Activated CD4-positive, alpha-beta memory T cell treated with anti-CD3 and anti-CD28 coated beads for 36 hours (primary cell): ENCODE measurements at regions of chr20 and their contacts with region 1.

Region 1: DNA sequence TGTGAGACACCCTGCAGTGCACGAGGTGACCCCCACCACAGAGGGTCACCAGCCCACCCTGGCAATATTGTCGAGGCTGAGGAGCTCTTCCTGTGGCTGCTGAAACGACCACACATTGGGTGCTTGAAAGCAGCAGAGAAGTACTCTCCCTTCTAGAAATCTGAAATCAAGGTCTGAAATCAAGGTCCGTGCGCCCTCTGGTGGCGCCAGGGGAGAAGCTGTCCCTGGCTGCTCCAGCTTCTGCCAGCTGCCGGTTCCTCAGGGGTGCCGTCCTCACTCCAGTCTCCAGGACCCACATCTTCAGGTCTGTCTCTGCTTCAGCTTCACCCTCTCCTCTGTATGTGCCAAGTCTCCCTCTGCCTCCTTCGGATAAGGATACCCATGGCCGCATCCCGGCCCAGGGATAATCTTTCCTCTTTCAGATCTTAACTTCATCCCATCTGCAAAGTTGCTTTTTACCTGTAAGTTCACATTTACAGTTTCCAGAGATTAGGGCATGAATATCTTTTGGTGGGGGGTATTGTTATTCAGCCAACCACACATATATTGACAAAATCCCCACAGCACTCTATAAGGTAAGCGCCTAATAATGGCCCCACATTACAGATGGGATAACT is 108.3 kb upstream of the PHACTR3 start:
- DNase-seq: peak; percentile 76
- H3K4me3 Mint-ChIP-seq: no peak overlapping the region
- H3K27ac Mint-ChIP-seq: no peak overlapping the region
- H3K4me1 Mint-ChIP-seq: no peaks in the 10 kb centered on the region
- H3K27me3 Mint-ChIP-seq: peaks cover 18% of the 10 kb centered on the region

Region 2: GRCh38 chr20:58864350-58864749 is 631.7 kb before region 1 on chr20:
- CTCF ChIA-PET with region 1: interaction called, 10 read pairs
- POLR2A ChIA-PET with region 1: no interaction called
- intact Hi-C with region 1: no loop called
- DNase-seq: no peak
- H3K4me3 Mint-ChIP-seq: no peak overlapping the region
- H3K27ac Mint-ChIP-seq: no peak overlapping the region
- H3K4me1 Mint-ChIP-seq: no peaks in the 10 kb centered on the region
- H3K27me3 Mint-ChIP-seq: peaks cover 9% of the 10 kb centered on the region

Region 3: DNA sequence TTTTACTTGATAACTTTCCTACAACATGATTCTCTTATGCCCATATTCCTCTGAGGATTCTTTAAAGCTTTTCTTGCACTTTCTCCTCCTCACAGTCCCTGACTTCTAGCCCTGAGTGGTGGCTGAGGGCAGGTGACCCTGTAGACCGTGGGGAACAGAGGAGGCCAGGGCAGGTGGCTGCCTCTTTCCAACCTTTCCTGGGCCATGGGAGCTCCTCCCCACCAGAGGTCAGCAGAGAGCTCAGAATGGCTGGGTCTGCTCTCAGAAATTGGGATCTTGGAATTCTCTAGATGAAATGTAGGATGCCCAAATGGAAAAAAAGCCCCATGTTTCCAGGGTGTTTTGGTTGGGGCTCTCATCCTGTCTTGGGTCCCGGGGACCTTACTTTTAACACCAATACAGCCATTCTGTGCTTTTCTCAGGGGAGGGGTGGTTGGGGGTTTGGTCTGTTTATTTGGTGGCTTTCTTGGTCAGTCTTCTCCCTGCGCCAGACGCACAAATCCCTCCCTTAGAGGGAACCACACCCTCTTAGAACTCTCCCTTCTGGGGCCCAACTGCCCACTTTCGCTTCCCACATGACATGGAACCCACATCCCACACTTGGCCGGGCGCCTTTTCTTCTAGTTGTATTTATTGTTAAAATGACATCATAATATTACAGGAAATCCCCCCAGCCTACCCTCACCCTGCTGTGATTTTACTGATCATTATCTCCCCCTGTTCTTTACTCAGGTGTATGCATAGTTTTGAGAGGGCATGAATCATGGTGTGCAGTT is 625.6 kb before region 1 on chr20:
- CTCF ChIA-PET with region 1: no interaction called
- POLR2A ChIA-PET with region 1: no interaction called
- intact Hi-C with region 1: loop called (anchors 5 kb)
- DNase-seq: peak; percentile 64
- H3K4me3 Mint-ChIP-seq: no peak overlapping the region
- H3K27ac Mint-ChIP-seq: no peak overlapping the region
- H3K4me1 Mint-ChIP-seq: peaks cover 9% of the 10 kb centered on the region
- H3K27me3 Mint-ChIP-seq: peaks cover 2% of the 10 kb centered on the region

Region 4: GRCh38 chr20:59165891-59166709 is 329.9 kb before region 1 on chr20:
- CTCF ChIA-PET with region 1: no interaction called
- POLR2A ChIA-PET with region 1: no interaction called
- intact Hi-C with region 1: no loop called
- DNase-seq: peak; percentile 65
- H3K4me3 Mint-ChIP-seq: peak overlapping the region; percentile 77
- H3K27ac Mint-ChIP-seq: peak overlapping the region; percentile 96
- H3K4me1 Mint-ChIP-seq: peaks cover 77% of the 10 kb centered on the region
- H3K27me3 Mint-ChIP-seq: no peaks in the 10 kb centered on the region

Region 5: DNA sequence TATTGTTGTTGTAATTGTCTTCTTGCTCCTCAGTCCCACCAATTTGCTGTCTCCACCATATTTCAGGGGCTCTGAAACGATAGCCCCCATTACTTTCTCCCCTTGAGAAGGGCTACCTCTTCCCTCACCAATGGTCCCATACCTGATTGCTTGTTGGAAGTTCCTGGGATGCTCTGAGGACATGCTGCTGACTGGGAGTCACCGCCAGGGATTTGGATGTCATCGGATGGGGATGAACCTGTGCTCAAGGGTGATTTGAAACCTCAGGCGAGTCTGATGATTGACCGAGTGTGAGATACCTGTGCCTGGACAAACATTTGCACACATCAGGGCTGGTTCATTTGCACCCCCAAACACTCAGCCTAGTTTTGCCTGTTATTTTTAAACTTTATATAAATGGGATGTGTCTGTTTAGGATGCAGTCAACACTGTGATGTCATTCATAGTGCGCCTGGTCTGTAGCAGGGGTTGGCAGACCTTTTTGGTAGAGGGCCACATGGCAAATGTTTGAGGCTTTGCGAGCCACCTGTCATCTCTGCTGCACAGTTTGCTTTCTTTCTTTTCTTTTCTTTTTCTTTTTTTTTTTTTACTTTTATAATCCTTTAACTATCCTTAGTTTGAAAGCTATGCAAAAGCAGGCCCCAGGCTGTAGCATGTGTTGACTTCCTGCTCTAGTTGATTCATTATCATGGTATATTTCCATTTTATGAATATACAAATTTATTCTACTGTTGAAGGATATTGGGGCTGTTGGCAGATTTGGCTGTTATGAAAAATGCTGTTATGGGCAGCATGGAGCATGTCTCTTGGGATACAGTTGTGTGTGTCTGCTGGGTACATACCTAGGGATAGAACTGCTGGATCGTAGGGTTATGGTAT is 10.2 kb before region 1 on chr20:
- CTCF ChIA-PET with region 1: interaction called, 11 read pairs
- POLR2A ChIA-PET with region 1: no interaction called
- intact Hi-C with region 1: no loop called
- DNase-seq: no peak
- H3K4me3 Mint-ChIP-seq: no peak overlapping the region
- H3K27ac Mint-ChIP-seq: no peak overlapping the region
- H3K4me1 Mint-ChIP-seq: no peaks in the 10 kb centered on the region
- H3K27me3 Mint-ChIP-seq: peaks cover 16% of the 10 kb centered on the region

Region 6: DNA sequence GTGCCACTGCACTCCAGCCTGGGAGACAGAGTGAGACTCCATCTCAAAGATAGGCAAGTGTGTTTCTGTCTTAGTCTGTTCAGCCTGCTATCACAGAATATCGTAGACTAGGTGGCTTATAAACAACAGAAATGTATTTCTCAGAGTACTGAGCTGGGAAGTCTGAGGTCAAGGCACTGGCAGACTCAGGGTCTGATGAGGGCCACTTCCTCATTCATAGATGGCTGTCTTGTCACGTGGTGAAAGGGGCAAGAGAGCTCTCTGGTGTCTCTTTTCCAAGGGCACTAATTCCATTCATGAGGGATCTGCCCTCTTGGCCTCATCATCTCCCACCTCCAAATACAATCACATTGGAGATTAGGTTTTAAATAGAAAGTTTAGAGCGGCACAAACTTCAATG is 12.7 kb after region 1 on chr20:
- CTCF ChIA-PET with region 1: interaction called, 20 read pairs
- POLR2A ChIA-PET with region 1: no interaction called
- intact Hi-C with region 1: no loop called
- DNase-seq: no peak
- H3K4me3 Mint-ChIP-seq: no peak overlapping the region
- H3K27ac Mint-ChIP-seq: no peak overlapping the region
- H3K4me1 Mint-ChIP-seq: no peaks in the 10 kb centered on the region
- H3K27me3 Mint-ChIP-seq: peaks cover 14% of the 10 kb centered on the region

Region 7: DNA sequence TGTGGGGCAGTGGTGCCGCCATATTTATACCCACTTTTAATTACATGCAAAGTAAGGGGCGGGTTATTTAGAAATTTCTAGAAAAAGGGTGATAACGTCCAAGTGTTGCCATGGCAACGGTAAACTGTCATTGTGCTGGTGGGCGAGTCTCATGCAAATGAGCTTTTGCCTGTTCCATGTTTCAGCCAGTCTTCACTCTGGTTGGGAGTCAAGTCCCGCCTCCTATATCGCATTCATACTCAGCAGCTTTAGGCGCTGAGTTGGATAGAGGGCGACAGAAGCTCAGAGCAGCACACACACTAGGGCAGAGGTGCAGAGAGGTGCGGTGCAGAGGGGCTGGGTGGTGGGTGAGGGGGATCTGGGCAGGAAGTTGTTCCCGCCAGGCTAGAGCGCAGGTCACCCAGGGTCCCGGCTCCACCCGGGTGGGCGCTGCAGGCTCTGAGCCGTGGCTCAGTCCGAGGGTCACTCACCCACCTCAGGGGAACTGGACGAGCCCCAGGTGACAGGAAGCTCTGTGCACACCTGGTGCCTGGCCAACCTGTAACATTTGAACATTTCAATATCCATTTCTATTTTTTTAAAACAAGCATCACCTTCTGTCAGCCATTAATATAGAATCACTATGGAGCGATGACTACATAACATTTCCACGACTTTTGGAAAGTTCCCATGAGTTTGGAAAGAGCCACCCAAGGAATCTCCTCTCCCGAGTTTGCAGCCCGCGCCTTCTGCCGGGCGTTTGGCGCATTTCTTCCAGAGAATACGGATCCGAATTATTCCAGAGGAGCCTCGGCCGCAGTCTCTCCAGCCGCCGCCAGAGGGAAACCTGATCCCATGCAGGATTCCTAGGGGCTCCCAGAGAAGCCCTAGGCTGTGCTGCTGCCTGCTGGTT is 19.3 kb after region 1 on chr20:
- CTCF ChIA-PET with region 1: interaction called, 12 read pairs
- POLR2A ChIA-PET with region 1: no interaction called
- intact Hi-C with region 1: no loop called
- DNase-seq: peak; percentile 17
- H3K4me3 Mint-ChIP-seq: no peak overlapping the region
- H3K27ac Mint-ChIP-seq: no peak overlapping the region
- H3K4me1 Mint-ChIP-seq: no peaks in the 10 kb centered on the region
- H3K27me3 Mint-ChIP-seq: peaks cover 57% of the 10 kb centered on the region